T-cell (primary cell): ENCODE measurements at regions of chr3 and their contacts with region 1.

Region 1: DNA sequence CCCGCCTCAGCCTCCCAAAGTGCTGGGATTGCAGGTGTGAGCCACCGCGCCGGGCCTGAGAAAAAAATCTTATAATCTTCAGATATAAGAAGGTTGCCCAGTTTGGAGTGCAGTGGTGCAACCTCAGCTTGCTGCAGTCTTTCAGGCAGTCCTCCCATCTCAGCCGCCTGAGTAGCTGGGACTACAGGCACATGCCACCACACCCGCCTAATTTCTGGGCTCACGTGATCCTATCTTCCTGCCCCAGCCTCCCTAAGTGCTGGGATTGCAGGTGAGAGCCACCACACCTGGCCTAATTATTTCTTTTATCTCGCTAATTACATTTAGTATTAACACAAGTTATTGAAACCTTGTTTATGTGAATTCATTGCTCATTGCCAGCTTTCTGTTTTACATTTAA is 13.5 kb downstream of the PAK2 start:
- DNase-seq: no peak
- ATAC-seq: no peak
- H3K4me3 ChIP-seq: no peak overlapping the region
- H3K4me3 Mint-ChIP-seq: no peak overlapping the region
- H3K27ac ChIP-seq: no peak overlapping the region
- H3K27ac Mint-ChIP-seq: no peak overlapping the region
- H3K4me1 ChIP-seq: peaks cover 0 to 4% of the 10 kb centered on the region in 2 experiments
- H3K4me1 Mint-ChIP-seq: peaks cover 61 to 69% (median 64%) of the 10 kb centered on the region in 3 donors
- H3K27me3 ChIP-seq: no peaks in the 10 kb centered on the region
- H3K27me3 Mint-ChIP-seq: no peaks in the 10 kb centered on the region

Region 2: GRCh38 chr3:196665962-196666867 is 87.0 kb before region 1 on chr3:
- CTCF ChIA-PET with region 1: no interaction called
- POLR2A ChIA-PET with region 1: interaction called in 1 of 2 experiments, 12 read pairs
- DNase-seq: no peak
- ATAC-seq: no peak
- H3K4me3 ChIP-seq: no peak overlapping the region
- H3K4me3 Mint-ChIP-seq: no peak overlapping the region
- H3K27ac ChIP-seq: no peak overlapping the region
- H3K27ac Mint-ChIP-seq: peak overlapping the region in 1 of 2 donors; percentile 44
- H3K4me1 ChIP-seq: peaks cover 6 to 17% of the 10 kb centered on the region in 2 experiments
- H3K4me1 Mint-ChIP-seq: peaks cover 10 to 20% (median 16%) of the 10 kb centered on the region in 3 donors
- H3K27me3 ChIP-seq: peaks cover 0 to 2% of the 10 kb centered on the region in 2 experiments
- H3K27me3 Mint-ChIP-seq: no peaks in the 10 kb centered on the region

Region 3: DNA sequence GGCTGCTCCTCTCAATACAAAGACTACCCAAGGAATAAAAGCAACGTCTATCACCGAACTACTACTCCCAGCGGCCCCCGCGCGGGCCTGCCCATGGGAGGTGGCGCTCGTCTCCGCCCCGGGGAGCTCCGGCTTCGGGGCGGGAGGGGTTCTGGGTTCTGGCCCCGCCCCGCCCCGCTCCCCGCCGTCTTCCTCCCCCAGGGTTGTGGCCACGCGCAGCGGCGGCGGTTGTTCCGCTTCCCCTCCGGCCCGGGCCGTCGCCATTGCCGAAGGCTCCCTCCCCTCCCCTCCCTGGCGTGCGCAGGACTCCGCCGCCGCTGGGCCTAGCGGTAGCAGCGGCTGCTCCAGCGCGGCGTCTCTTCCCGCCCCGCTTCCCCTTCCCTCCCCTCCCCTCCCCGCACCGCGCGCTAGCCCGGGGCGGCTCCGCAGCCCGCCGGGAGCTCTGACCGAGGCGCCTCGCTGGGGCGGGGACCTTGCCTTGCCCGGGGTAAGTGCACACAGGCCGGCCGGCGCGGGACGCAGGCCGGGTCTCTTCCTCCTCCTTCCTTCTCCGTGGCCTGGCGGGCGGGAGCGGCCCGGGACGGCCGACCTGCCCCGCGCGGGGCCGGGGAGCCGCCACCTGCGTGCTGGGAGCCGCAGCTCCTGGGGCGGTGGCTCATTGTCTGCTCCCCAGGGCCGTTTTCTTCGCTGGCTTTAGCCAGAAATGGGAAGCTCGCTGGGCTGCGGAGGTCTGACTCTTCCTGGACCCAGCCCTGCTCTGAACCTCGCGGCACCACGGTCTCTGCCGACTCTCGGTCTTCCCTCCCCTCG is 13.3 kb before region 1 on chr3 and contains the start of gene PAK2:
- CTCF ChIA-PET with region 1: no interaction called
- POLR2A ChIA-PET with region 1: no interaction called
- DNase-seq: peak; percentile 79 to 93 (median 88)
- ATAC-seq: peak; percentile 88 to 94 (median 89)
- H3K4me3 ChIP-seq: peak within 1 kb of the TSS; percentile 86 to 91
- H3K4me3 Mint-ChIP-seq: peak within 1 kb of the TSS; percentile 99 to 100 (median 99)
- H3K27ac ChIP-seq: peak within 1 kb of the TSS; percentile 83
- H3K27ac Mint-ChIP-seq: peak within 1 kb of the TSS; percentile 97 to 98
- H3K4me1 ChIP-seq: peaks cover 15 to 23% of the 10 kb centered on the region in 2 experiments
- H3K4me1 Mint-ChIP-seq: peaks cover 29 to 38% (median 37%) of the 10 kb centered on the region in 3 donors
- H3K27me3 ChIP-seq: no peaks in the 10 kb centered on the region
- H3K27me3 Mint-ChIP-seq: no peaks in the 10 kb centered on the region
- total RNA-seq, gene PAK2: 62.7 to 87.3 (median 76.2) TPM